ENCODE measurements at regions of chr1 and their contacts with region 1.

Region 1: GRCh38 chr1:44354840-44355581 is at the start of gene ERI3:
- DNase-seq: peak; percentile 96
- ATAC-seq: peak; percentile 100
- H3K4me3 ChIP-seq: peak within 1 kb of the TSS; percentile 81
- H3K27ac ChIP-seq: peak within 1 kb of the TSS; percentile 41
- H3K4me1 ChIP-seq: peaks cover 3% of the 10 kb centered on the region
- H3K27me3 ChIP-seq: no peaks in the 10 kb centered on the region
- CTCF ChIP-seq: no peak
- POLR2A ChIP-seq: peak; percentile 84
- RAD21 ChIP-seq: no peak
- total RNA-seq, gene ERI3: 55.3 and 56.6 TPM in 2 replicates

Region 2: DNA sequence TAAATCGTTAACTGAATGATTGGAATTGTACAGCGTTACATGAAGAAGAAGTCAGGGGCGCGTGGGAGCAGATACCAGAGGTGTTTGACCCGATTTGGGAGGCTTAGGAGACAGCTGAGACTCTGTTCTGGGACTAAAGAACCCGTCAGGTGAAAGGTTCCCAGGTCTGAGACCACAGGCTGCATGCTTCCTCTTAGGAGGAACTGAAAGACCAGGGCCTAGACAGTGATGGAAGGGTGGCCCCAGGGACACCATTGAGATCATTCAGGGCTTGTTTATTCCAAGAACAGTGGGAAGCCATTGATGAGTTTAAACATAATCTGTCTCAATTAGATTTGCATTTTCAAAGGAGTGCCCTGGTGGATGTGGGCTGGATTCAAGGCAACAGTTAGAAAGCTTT is 235.5 kb before region 1 on chr1:
- CTCF ChIA-PET with region 1: no interaction called
- POLR2A ChIA-PET with region 1: no interaction called
- dilution Hi-C with region 1: no loop called
- in situ Hi-C with region 1: no loop called
- intact Hi-C with region 1: no loop called
- DNase-seq: no peak
- ATAC-seq: no peak
- H3K4me3 ChIP-seq: no peak overlapping the region
- H3K27ac ChIP-seq: no peak overlapping the region
- H3K4me1 ChIP-seq: no peaks in the 10 kb centered on the region
- H3K27me3 ChIP-seq: peaks cover 11% of the 10 kb centered on the region
- CTCF ChIP-seq: no peak
- POLR2A ChIP-seq: no peak
- RAD21 ChIP-seq: no peak

Region 3: DNA sequence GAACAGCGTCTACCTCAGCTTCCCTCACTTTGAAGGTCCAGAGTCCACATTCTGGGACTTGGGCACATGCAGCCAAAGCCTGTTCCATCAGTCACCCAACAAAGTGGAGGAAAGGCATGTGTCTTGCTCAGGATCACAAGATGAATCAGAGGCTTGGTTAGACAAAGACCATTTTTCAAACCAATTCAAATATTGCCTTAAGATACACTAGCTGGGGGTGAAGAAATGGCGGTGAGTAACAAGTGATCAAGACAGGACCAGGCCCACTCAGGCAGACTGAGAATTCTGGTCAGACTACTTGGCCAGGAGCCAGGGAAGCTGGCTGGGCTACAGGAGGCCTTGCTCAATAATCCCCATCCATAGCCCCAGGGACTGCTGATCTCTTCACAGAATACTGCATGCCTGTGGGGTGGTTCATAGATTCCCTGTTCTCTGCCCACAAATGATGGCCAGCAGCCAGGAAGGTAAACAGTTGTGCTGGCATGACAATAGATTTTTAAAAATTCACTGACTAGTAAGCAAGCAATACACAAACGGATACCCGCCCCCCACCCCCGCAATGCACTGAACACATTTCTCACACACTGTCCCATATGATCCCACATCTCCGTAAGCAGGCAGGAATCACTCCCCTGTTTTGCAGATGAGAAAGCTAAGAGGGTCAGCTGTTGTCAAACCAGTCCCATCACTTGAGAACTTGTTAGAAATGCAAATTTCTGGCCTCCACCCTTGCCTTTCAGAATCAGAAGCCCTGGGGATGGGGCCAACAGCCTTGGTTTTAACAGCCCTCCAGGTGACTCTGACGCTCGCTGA is 27.1 kb before region 1 on chr1:
- CTCF ChIA-PET with region 1: no interaction called
- POLR2A ChIA-PET with region 1: no interaction called
- dilution Hi-C with region 1: no loop called
- in situ Hi-C with region 1: no loop called
- intact Hi-C with region 1: loop called (anchors 2 kb)
- DNase-seq: peak; percentile 100
- ATAC-seq: peak; percentile 93
- H3K4me3 ChIP-seq: no peak overlapping the region
- H3K27ac ChIP-seq: peak overlapping the region; percentile 7
- H3K4me1 ChIP-seq: peaks cover 15% of the 10 kb centered on the region
- H3K27me3 ChIP-seq: no peaks in the 10 kb centered on the region
- CTCF ChIP-seq: no peak
- POLR2A ChIP-seq: no peak
- RAD21 ChIP-seq: no peak

Region 4: DNA sequence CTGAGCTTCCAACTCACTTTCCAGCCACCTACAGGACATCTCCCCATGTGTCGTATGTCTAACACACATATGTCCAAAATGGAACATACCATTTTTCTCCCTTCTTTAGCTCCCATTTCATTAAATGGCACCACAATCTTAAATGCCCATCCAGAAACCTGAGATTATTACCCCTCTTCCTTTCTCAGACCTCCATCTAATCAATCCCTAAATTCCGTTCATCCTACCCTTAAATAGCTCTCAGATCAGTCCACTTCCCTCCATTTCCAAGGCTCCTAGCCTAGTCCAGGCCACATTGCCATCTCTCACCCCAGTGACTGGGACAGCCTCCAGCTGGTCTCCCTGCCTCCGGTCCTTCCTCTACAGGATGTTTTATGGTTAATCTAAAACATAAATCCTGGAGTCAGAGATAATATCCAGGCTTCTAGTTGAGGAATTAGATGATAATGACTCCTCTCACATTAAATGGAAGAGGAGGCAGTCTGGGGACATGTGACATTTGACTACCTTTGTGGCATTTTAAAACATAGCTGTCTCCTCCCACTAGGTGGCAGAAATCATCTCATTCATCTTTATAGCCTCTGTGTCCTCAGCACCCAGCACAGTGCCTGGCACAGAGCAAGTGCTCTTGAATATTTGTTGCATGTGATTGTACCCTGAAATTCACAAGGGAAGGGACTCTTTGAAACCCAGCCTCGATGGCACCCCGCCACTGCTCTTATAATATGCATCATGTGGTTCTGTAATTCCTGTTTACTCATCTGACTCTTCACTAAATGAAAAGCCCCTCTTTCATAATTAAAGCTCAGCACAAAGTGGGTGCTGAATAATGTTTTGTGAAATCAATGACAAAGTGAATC is 216.9 kb after region 1 on chr1:
- CTCF ChIA-PET with region 1: no interaction called
- POLR2A ChIA-PET with region 1: no interaction called
- dilution Hi-C with region 1: no loop called
- in situ Hi-C with region 1: no loop called
- intact Hi-C with region 1: no loop called
- DNase-seq: no peak
- ATAC-seq: no peak
- H3K4me3 ChIP-seq: no peak overlapping the region
- H3K27ac ChIP-seq: no peak overlapping the region
- H3K4me1 ChIP-seq: no peaks in the 10 kb centered on the region
- H3K27me3 ChIP-seq: peaks cover 58% of the 10 kb centered on the region
- CTCF ChIP-seq: peak; percentile 21; the same call in 1 of the 2 replicates
- POLR2A ChIP-seq: no peak
- RAD21 ChIP-seq: 0 out of 2 replicates have a peak, but pooled peaks have one; percentile 10